Activated T-helper 1 cell treated with anti-CD3 and anti-CD28 coated beads, Interleukin-12 subunit alpha, Interleukin-12 subunit beta, Interleukin-2, Interleukin-4 antibody, amounts not matched to agents 30 ng/mL and 10 ng/mL and 1 ng/mL, durations not matched to agents 14 hours and 24 hours and 36 hours (primary cell): ENCODE measurements at regions of chr10 and their contacts with region 1.

Region 1: DNA sequence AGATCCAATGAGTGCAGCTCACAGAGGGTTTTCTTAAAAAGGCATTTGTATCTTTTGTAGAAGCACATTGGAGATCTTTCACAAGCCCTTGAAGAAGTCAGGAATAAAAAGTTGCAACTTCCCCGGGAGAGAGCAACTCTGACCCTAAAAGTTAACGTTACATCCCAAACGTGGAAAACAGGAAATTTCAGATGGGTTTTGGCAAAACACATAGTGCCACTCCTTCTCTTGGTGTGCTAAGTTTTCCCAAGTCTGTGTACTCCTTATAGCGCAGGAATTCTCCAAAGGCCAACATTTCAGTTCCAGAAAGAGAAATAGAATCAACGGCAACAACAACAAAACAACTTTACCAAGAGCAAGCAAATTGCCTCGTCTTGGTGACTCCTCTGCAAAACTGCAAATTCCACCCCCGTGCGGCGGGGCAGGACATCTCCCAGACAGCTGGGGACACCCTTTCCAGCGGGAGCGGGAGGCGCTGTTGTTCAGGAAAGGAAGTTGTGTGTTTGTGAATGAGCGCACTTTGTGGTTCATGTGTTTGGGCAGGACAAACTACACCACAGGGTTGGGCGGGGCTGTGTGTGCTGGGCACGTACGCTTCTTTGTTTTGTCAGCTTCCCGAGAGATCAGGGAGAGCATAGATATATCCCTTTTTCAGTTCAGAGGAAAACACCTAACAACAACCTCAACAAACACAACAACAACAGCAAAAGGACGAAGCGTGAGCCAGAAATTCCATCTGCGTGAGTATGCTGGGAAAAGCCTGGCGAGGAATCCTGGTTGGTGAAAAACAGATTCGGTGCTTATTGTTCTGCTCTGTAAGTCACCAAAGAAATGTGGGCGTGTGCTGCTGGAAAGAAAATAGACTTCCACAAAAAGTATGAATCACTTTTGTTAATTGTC is 294.7 kb upstream of the PITRM1 start:
- DNase-seq: no peak
- H3K4me3 Mint-ChIP-seq: peak overlapping the region; percentile 62
- H3K27ac Mint-ChIP-seq: peak overlapping the region; percentile 90
- H3K4me1 Mint-ChIP-seq: peaks cover 53% of the 10 kb centered on the region
- H3K27me3 Mint-ChIP-seq: no peaks in the 10 kb centered on the region

Region 2: DNA sequence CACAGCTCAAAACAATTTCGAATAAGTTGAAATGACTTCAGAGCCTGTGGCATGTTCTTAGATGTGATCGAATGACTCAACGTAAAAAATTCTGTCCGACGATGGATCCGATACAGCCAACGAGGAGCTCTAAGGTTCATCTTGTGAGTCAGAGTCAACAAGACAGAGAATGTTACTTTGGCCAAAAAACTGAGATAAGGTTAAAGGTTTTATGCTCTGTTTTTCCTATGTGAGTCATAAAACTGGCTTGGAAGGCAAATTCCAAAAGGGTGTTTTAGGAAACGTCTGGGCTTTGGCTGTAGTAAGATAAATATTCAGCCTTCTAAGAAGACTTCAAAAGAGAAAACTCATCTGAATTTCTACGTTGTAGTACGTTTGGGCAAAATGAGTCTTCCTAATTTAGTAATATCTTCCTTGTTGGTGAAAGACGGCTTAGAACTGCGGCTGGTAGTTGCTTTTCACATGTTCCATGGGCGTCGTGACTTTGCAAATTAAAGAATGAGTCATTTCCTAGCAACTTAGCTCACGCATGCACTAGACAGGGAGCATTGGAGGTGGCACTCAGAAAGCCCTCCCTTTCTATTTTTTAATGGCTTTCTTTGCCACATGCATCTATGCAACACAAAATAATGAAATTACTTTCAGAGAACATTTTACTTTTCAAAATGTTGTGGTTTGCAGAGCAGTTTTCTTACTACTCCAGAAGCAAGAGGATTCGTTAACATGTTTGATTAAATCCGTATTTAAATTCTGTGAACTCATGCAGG is 371.7 kb before region 1 on chr10:
- intact Hi-C with region 1: loop called (anchors 5 kb)
- DNase-seq: peak; percentile 57
- H3K4me3 Mint-ChIP-seq: peak overlapping the region; percentile 69
- H3K27ac Mint-ChIP-seq: peak overlapping the region; percentile 97
- H3K4me1 Mint-ChIP-seq: peaks cover 70% of the 10 kb centered on the region
- H3K27me3 Mint-ChIP-seq: no peaks in the 10 kb centered on the region

Region 3: GRCh38 chr10:3226960-3227744 is 240.2 kb before region 1 on chr10:
- intact Hi-C with region 1: loop called (anchors 2 kb)
- DNase-seq: no peak
- H3K4me3 Mint-ChIP-seq: no peak overlapping the region
- H3K27ac Mint-ChIP-seq: no peak overlapping the region
- H3K4me1 Mint-ChIP-seq: peaks cover 18% of the 10 kb centered on the region
- H3K27me3 Mint-ChIP-seq: peaks cover 18% of the 10 kb centered on the region

Region 4: GRCh38 chr10:3477683-3478082 is 10.4 kb after region 1 on chr10:
- intact Hi-C with region 1: loop called (anchors 1 kb)
- DNase-seq: no peak
- H3K4me3 Mint-ChIP-seq: no peak overlapping the region
- H3K27ac Mint-ChIP-seq: no peak overlapping the region
- H3K4me1 Mint-ChIP-seq: peaks cover 36% of the 10 kb centered on the region
- H3K27me3 Mint-ChIP-seq: peaks cover 18% of the 10 kb centered on the region

Region 5: DNA sequence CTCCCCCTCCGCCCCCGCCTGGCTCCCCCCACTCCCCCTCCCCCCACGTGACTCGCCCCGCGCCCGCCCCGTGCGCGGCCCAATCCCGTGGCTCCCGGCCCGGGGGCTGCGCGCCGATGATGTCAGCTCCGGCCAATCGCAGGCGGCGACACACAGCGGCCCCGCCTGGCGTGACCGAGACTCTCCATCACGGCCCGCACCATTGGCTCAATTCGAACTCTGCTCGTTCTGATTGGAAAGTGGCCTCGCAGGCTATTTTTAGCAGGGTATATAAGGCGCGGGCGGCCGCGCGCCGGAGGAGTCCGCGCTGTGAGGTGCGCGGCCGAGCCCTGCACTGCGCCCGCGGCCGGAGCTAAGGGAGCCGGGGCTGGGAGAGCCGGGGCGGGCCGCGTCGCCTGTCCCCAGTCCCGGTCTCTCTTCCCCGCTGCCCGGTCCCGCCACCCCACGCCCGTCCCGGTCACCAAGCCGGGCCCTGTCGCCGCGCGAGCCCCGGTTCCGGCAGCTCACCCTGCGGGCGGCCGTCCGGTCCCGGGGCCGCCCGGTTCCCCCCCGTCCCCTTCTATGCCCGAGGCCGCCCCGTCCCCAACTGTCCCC is 318.1 kb after region 1 on chr10:
- intact Hi-C with region 1: loop called (anchors 5 kb)
- DNase-seq: peak; percentile 99
- H3K4me3 Mint-ChIP-seq: peak overlapping the region; percentile 93
- H3K27ac Mint-ChIP-seq: peak overlapping the region; percentile 96
- H3K4me1 Mint-ChIP-seq: peaks cover 49% of the 10 kb centered on the region
- H3K27me3 Mint-ChIP-seq: no peaks in the 10 kb centered on the region

Region 6: GRCh38 chr10:4214908-4215307 is 747.6 kb after region 1 on chr10:
- intact Hi-C with region 1: no loop called
- DNase-seq: no peak
- H3K4me3 Mint-ChIP-seq: no peak overlapping the region
- H3K27ac Mint-ChIP-seq: no peak overlapping the region
- H3K4me1 Mint-ChIP-seq: no peaks in the 10 kb centered on the region
- H3K27me3 Mint-ChIP-seq: peaks cover 7% of the 10 kb centered on the region

Region 7: GRCh38 chr10:4651404-4652037 is 1184.2 kb after region 1 on chr10:
- intact Hi-C with region 1: loop called (anchors 2 kb)
- DNase-seq: no peak
- H3K4me3 Mint-ChIP-seq: peak overlapping the region; percentile 8
- H3K27ac Mint-ChIP-seq: peak overlapping the region; percentile 85
- H3K4me1 Mint-ChIP-seq: peaks cover 32% of the 10 kb centered on the region
- H3K27me3 Mint-ChIP-seq: peaks cover 3% of the 10 kb centered on the region